Gastrocnemius medialis (tissue), 4 donors: ENCODE measurements at regions of chr4 and their contacts with region 1.

Region 1: GRCh38 chr4:65007841-65008439 is 598.7 kb upstream of the TECRL start:
- DNase-seq: no peak
- ATAC-seq: no peak
- H3K4me3 ChIP-seq: no peak overlapping the region
- H3K27ac ChIP-seq: no peak overlapping the region
- H3K4me1 ChIP-seq: no peaks in the 10 kb centered on the region
- H3K27me3 ChIP-seq: no peaks in the 10 kb centered on the region
- CTCF ChIP-seq: peak in 1 of 5 experiments; percentile 21
- POLR2A ChIP-seq: no peak

Region 2: GRCh38 chr4:64911846-64912245 is 96.1 kb before region 1 on chr4:
- in situ Hi-C with region 1: loop called in 1 of 4 experiments (anchors 25 kb)
- intact Hi-C with region 1: no loop called
- DNase-seq: no peak
- ATAC-seq: no peak
- H3K4me3 ChIP-seq: no peak overlapping the region
- H3K27ac ChIP-seq: no peak overlapping the region
- H3K4me1 ChIP-seq: no peaks in the 10 kb centered on the region
- H3K27me3 ChIP-seq: no peaks in the 10 kb centered on the region
- CTCF ChIP-seq: no peak
- POLR2A ChIP-seq: no peak

Region 3: GRCh38 chr4:65071564-65071963 is 63.6 kb after region 1 on chr4:
- in situ Hi-C with region 1: no loop called
- intact Hi-C with region 1: no loop called
- DNase-seq: no peak
- ATAC-seq: no peak
- H3K4me3 ChIP-seq: no peak overlapping the region
- H3K27ac ChIP-seq: no peak overlapping the region
- H3K4me1 ChIP-seq: no peaks in the 10 kb centered on the region
- H3K27me3 ChIP-seq: no peaks in the 10 kb centered on the region
- CTCF ChIP-seq: no peak
- POLR2A ChIP-seq: no peak

Region 4: GRCh38 chr4:65152205-65152604 is 144.3 kb after region 1 on chr4:
- in situ Hi-C with region 1: no loop called
- intact Hi-C with region 1: no loop called
- DNase-seq: no peak
- ATAC-seq: no peak
- H3K4me3 ChIP-seq: no peak overlapping the region
- H3K27ac ChIP-seq: no peak overlapping the region
- H3K4me1 ChIP-seq: no peaks in the 10 kb centered on the region
- H3K27me3 ChIP-seq: no peaks in the 10 kb centered on the region
- CTCF ChIP-seq: no peak
- POLR2A ChIP-seq: no peak